Uterus (tissue), 4 donors: ENCODE measurements at regions of chr18 and their contacts with region 1.

Region 1: GRCh38 chr18:26362021-26362420 is 135.8 kb downstream of the TAF4B start:
- DNase-seq: no peak
- H3K4me3 ChIP-seq: no peak overlapping the region
- H3K27ac ChIP-seq: no peak overlapping the region
- H3K4me1 ChIP-seq: no peaks in the 10 kb centered on the region
- H3K27me3 ChIP-seq: no peaks in the 10 kb centered on the region
- CTCF ChIP-seq: no peak
- POLR2A ChIP-seq: no peak

Region 2: GRCh38 chr18:26307189-26307773 is 54.7 kb before region 1 on chr18:
- intact Hi-C with region 1: no loop called
- DNase-seq: no peak
- H3K4me3 ChIP-seq: no peak overlapping the region
- H3K27ac ChIP-seq: no peak overlapping the region
- H3K4me1 ChIP-seq: no peaks in the 10 kb centered on the region
- H3K27me3 ChIP-seq: no peaks in the 10 kb centered on the region
- CTCF ChIP-seq: peak; percentile 33 to 42 (median 36)
- POLR2A ChIP-seq: no peak

Region 3: DNA sequence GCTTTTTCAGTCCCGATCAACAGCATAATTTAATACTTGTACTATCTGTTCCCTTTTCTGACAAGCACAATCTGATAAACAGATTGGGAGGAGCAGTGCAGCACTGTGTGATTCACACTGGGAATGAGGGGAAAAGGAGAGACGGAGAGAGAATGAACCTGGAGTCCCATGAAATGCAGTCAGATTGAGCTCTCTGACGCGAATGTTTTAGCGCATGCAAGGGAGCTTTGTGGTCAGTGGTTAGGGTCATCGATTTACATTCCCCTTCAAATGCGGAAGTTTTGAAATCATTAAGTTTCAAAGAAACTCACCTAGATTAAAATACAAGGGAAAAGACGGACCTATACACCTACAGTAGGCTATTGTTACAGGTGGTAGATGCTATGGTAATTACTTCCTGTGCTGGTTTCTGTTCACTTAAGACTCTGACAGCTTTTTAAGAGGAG is 86.7 kb after region 1 on chr18:
- intact Hi-C with region 1: loop called (anchors 10 kb)
- DNase-seq: no peak
- H3K4me3 ChIP-seq: no peak overlapping the region
- H3K27ac ChIP-seq: no peak overlapping the region
- H3K4me1 ChIP-seq: no peaks in the 10 kb centered on the region
- H3K27me3 ChIP-seq: no peaks in the 10 kb centered on the region
- CTCF ChIP-seq: no peak
- POLR2A ChIP-seq: no peak